ENCODE measurements at regions of chr3 and their contacts with region 1.

Region 1: DNA sequence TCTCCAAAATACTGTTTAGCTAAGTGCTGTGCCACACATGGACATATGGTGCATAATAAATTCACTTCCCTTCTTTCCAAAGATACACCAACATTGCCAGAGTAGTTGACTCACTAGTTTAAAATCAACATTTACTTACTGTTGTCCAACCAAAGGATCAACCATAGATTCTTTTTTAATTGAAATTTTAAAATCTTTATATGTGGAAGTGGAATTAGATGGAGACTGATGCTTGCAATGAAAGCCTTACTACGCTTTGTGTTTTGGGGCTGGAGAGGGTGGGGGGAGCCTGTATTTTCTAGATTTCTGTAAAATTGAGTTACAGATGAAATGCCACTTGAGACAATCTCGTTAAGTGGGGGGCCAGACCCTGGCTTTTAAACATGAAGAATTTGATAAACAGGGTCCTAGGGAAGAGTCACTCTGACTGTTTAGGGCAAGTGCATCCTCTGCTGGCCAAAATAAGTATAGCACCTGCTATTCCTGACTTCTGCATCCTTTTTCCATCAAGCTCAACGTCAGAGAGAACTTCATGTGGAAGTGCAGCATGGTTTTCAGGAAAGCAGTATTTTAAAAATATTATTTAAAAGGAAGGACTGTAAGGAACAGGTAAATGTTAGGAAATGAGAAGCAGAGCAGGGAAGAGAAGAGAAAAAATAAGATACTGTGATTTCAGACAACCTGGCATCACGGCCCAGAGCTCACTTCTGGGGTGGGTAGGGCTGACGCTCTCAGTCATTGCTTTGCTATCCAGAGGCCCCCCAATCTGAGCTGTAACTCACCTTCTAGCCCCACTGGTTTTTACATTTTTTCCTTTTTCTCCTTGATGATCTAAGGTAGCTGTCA is 76.7 kb downstream of the BOC start:
- DNase-seq: no peak
- ATAC-seq: peak; percentile 72 to 78 (median 76)
- H3K4me3 ChIP-seq: no peak overlapping the region
- H3K27ac ChIP-seq: no peak overlapping the region
- H3K4me1 ChIP-seq: peaks cover 0 to 13% (median 0%) of the 10 kb centered on the region in 4 donors
- H3K27me3 ChIP-seq: no peaks in the 10 kb centered on the region
- CTCF ChIP-seq: peak; percentile 90 to 99 (median 94)
- POLR2A ChIP-seq: no peak

Region 2: DNA sequence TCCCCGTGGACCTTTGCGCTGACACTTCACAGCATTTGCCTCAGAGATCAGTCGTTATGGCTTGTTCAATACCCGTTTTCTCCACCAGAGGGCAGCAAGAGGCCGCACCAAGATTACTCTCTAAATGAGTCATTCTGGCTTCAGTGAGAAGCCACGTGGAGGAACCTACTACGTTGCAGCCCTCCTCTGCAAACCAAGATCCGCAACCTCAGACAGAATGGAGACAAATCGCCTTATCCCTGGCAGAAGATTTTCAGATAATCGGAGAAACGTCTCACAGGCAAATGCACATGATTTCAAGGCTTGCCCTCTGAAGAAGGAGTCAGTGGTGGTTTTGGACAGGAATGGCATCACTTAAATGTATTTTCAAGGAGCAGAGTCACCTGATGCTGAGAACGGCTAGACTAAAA is 236.7 kb before region 1 on chr3:
- intact Hi-C with region 1: loop called (anchors 5 kb)
- DNase-seq: peak; percentile 58 to 79 (median 71)
- ATAC-seq: peak; percentile 96 to 100 (median 96)
- H3K4me3 ChIP-seq: no peak overlapping the region
- H3K27ac ChIP-seq: no peak overlapping the region
- H3K4me1 ChIP-seq: peaks cover 0 to 13% (median 0%) of the 10 kb centered on the region in 4 donors
- H3K27me3 ChIP-seq: no peaks in the 10 kb centered on the region
- CTCF ChIP-seq: peak; percentile 92 to 96 (median 94)
- POLR2A ChIP-seq: no peak

Region 3: GRCh38 chr3:113148286-113148685 is 139.7 kb before region 1 on chr3:
- intact Hi-C with region 1: loop called in 1 of 2 experiments (anchors 10 kb)
- DNase-seq: no peak
- ATAC-seq: peak in 1 of 4 donors; percentile 10
- H3K4me3 ChIP-seq: no peak overlapping the region
- H3K27ac ChIP-seq: no peak overlapping the region
- H3K4me1 ChIP-seq: no peaks in the 10 kb centered on the region
- H3K27me3 ChIP-seq: no peaks in the 10 kb centered on the region
- CTCF ChIP-seq: no peak
- POLR2A ChIP-seq: no peak

Region 4: GRCh38 chr3:113685956-113686754 is 398.1 kb after region 1 on chr3:
- intact Hi-C with region 1: no loop called
- DNase-seq: peak; percentile 25 to 78 (median 68)
- ATAC-seq: peak; percentile 89 to 94 (median 91)
- H3K4me3 ChIP-seq: no peak overlapping the region
- H3K27ac ChIP-seq: peak overlapping the region; percentile 27 to 59 (median 55)
- H3K4me1 ChIP-seq: peaks cover 0 to 40% (median 22%) of the 10 kb centered on the region in 4 donors
- H3K27me3 ChIP-seq: no peaks in the 10 kb centered on the region
- CTCF ChIP-seq: peak in 2 of 4 donors; percentile 12 to 25
- POLR2A ChIP-seq: no peak

Measured in right lobe of liver (tissue), 6 donors.